Gastrocnemius medialis (tissue), 4 donors: ENCODE measurements at regions of chr1 and their contacts with region 1.

Region 1: DNA sequence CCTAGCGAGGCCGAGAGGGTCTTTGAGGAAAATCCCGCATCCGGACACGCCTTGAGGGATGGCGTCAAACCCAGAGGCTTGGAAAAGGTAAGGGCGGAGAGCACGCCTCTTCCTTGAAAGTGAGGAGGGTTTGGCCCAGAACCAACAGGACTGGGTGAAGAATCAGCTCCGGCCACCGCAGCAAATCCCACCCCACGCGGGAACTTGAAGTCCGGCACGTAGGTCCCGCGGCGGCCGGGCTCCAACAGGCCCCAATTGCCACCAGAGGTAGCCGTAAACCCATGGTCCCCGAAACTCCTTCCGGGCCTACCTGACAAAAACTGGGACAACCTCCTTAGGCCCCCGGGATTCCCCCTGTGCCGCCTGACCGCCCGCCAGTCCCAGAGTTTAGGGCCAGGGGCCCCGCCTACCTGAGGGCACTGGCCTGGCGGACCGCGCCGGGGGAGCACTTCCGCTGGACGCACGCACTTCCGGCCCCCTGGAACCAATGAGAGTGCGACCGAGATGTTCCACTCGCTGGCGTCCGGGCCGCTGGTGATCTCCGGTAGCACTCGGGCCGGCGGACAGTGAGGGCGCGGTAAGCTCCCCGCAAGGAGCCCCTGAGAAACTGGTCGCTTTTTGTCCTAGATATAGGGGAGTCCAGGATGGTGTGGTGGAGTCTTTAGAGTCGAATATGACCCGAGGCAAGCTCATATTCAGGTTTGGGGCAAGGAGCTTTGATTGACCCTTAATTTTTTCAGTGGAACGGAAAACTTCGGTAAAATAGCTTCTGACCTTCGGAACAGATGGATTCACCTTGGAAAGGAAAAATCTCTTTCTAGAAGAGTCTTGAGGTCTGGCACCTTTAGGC is at the starts of genes LZIC and NMNAT1:
- DNase-seq: peak; percentile 89 to 93
- ATAC-seq: peak; percentile 80 to 90
- H3K4me3 ChIP-seq: peak within 1 kb of the TSS; percentile 60 to 89 (median 82)
- H3K27ac ChIP-seq: peak within 1 kb of the TSS; percentile 93 to 95 (median 94)
- H3K4me1 ChIP-seq: peaks cover 33 to 35% of the 10 kb centered on the region in 2 donors
- H3K27me3 ChIP-seq: no peaks in the 10 kb centered on the region
- CTCF ChIP-seq: peak in 1 of 5 experiments; percentile 24
- POLR2A ChIP-seq: peak; percentile 88 to 95
- total RNA-seq, gene LZIC: 9.4 to 21.7 (median 19.4) TPM
- total RNA-seq, gene NMNAT1: 5.6 to 12.4 (median 8.8) TPM

Region 2: DNA sequence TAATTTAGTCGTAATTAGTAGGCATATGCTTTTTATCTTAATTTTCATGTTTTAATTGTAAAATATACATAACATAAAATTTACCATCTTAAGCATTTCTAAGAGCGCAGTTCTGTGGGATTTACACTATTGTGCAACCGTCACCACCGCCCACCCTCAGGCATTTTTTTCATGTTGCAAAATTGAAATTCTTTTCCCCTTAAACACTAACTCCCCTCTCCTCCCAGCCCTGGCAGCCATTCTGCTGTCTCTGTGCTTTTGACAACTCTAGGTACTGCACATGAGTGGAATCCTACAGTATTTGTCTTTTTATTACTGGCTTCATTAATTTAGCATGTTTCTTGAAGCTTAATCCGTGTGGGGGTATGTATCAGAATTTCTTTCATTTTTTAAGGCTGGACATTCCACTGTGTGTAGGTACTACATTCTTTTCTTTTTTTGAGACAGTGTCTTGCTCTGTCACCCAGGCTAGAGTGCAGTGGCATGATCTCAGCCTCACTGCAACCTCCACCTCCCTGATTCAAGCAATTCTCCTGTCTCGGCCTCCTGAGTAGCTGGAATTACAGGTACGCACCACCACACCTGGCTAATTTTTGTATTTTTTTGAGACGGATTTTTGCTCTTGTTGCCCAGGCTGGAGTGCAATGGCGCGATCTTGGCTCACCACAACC is 283.7 kb before region 1 on chr1:
- in situ Hi-C with region 1: no loop called
- intact Hi-C with region 1: no loop called
- DNase-seq: no peak
- ATAC-seq: no peak
- H3K4me3 ChIP-seq: no peak overlapping the region
- H3K27ac ChIP-seq: no peak overlapping the region
- H3K4me1 ChIP-seq: no peaks in the 10 kb centered on the region
- H3K27me3 ChIP-seq: peaks cover 0 to 3% (median 0%) of the 10 kb centered on the region in 3 donors
- CTCF ChIP-seq: no peak
- POLR2A ChIP-seq: no peak

Region 3: DNA sequence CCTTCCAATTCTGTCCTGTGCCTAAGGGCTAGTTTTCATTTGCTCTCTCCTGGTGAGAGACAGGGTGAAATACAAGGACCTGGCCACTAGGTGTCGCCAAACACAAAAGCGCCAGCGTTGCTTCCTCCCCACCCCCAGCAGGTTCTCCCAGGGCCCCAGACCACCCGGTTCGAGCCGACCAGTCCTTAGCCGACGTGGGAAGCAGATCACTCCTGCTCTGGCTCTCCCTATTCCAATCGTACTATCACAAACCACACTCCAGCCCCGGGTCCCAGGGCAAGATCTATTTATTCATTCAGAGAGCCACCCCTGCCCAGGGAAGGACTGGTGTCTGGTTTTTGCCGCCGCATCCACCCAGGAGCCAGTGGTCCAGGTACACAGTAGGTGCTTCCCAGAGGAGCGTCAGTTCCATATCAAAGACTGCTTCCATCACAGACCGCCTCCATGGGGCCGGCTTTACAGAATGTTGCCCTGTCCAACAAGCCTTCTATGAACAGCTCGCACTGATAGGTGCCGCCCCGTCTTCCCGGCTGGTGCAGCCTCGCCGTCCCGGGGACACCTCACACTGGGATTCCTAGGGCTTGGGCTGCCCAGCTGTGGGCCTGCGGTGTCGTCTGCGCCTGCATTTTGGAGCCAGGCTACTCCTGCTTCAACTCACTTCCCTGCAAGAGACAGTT is 68.1 kb before region 1 on chr1:
- in situ Hi-C with region 1: no loop called
- intact Hi-C with region 1: loop called (anchors 1 kb)
- DNase-seq: peak; percentile 36 to 65
- ATAC-seq: peak; percentile 77 to 79
- H3K4me3 ChIP-seq: peak overlapping the region in 1 of 4 donors; percentile 9
- H3K27ac ChIP-seq: peak overlapping the region in 2 of 4 donors; percentile 18 to 35
- H3K4me1 ChIP-seq: peaks cover 16 to 33% of the 10 kb centered on the region in 2 donors
- H3K27me3 ChIP-seq: no peaks in the 10 kb centered on the region
- CTCF ChIP-seq: peak; percentile 89 to 98 (median 91)
- POLR2A ChIP-seq: no peak

Region 4: GRCh38 chr1:9890224-9890731 is 52.9 kb before region 1 on chr1:
- in situ Hi-C with region 1: no loop called
- intact Hi-C with region 1: no loop called
- DNase-seq: peak in 1 of 2 donors; percentile 42
- ATAC-seq: peak; percentile 83 to 85
- H3K4me3 ChIP-seq: no peak overlapping the region
- H3K27ac ChIP-seq: peak overlapping the region; percentile 55 to 73 (median 64)
- H3K4me1 ChIP-seq: peaks cover 16 to 24% of the 10 kb centered on the region in 2 donors
- H3K27me3 ChIP-seq: no peaks in the 10 kb centered on the region
- CTCF ChIP-seq: no peak
- POLR2A ChIP-seq: no peak

Region 5: GRCh38 chr1:10074059-10074851 is 131.1 kb after region 1 on chr1:
- in situ Hi-C with region 1: no loop called
- intact Hi-C with region 1: no loop called
- DNase-seq: no peak
- ATAC-seq: peak; percentile 23 to 49
- H3K4me3 ChIP-seq: no peak overlapping the region
- H3K27ac ChIP-seq: peak overlapping the region in 3 of 4 donors; percentile 24 to 39 (median 24)
- H3K4me1 ChIP-seq: peaks cover 0 to under 1% of the 10 kb centered on the region in 2 donors
- H3K27me3 ChIP-seq: no peaks in the 10 kb centered on the region
- CTCF ChIP-seq: no peak
- POLR2A ChIP-seq: no peak

Region 6: GRCh38 chr1:10152709-10153284 is 209.6 kb after region 1 on chr1:
- in situ Hi-C with region 1: no loop called
- intact Hi-C with region 1: loop called (anchors 5 kb)
- DNase-seq: peak in 1 of 2 donors; percentile 39
- ATAC-seq: no peak
- H3K4me3 ChIP-seq: no peak overlapping the region
- H3K27ac ChIP-seq: peak overlapping the region; percentile 77 to 90 (median 86)
- H3K4me1 ChIP-seq: peaks cover 16 to 37% of the 10 kb centered on the region in 2 donors
- H3K27me3 ChIP-seq: no peaks in the 10 kb centered on the region
- CTCF ChIP-seq: peak in 4 of 5 experiments; percentile 26 to 64 (median 42)
- POLR2A ChIP-seq: no peak